Left cardiac atrium (tissue), 4 donors: ENCODE measurements at regions of chr20 and their contacts with region 1.

Region 1: DNA sequence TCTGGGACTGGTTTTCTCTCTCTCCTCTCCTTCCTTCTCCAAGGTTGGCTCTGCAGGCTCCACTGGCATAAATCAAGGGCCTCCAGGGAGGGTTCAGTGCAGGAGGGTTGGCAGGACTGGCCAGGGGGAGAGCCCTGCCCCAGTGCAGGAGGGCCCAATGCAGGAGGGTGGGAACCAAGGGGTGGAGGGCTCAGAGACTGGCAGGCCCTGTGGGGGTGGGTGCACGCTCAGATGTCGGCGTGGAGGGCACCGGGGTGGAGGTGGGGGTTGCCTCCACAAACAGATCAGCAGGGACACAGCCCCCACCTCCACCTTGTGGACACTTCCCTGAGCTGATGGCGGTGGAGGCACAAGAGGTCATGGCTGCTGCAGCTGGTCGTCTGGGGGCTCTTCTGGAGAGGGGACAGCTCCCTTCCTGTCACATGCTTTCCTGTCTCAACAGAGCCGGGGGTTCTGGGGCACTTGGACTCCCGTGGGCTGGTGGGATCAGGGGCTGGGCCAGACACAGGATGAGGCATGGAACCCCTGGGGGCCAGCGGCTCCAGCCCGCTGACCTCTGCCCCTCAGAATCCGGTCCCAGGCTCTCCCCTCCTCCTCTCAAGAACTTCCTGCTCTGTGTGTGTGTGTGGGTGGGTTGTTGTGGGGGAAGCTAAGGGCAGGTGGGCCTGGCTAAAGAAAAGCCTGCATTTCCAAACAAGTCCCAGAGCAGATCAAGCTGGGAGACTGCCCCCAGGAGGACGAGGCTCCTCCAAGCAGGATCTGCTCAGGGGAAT is 2.7 kb upstream of the ABHD16B start:
- DNase-seq: peak; percentile 64
- ATAC-seq: peak; percentile 32 to 42

Region 2: DNA sequence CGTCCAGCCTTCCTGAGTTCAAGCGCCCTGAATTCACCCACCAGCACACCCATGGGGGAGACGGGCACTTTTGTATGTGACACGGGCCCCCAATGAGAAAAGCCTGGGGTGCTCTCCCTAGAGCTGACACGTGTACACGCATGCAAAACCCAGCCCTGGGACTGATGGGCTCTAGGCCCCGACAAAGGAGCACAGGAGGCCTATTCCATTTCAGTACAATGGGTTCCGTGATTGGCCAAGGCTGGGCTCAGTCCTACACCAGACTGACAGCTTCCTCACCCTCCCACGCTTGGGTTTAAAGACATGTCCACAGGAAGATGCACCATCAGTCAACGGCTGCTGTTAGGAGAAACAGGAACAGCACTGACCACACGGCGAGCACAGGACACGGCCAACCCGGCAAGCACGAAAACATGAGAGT is 36.3 kb before region 1 on chr20:
- intact Hi-C with region 1: loop called in 1 of 2 experiments (anchors 5 kb)
- DNase-seq: no peak
- ATAC-seq: peak in 1 of 2 donors; percentile 30